ENCODE measurements at regions of chr3 and their contacts with region 1.

Region 1: GRCh38 chr3:138915503-138916498 is 31.1 kb downstream of the FOXL2 start:
- DNase-seq: peak; percentile 82
- H3K4me3 ChIP-seq: peak overlapping the region; percentile 48 to 69 (median 58)
- H3K27ac ChIP-seq: peak overlapping the region; percentile 50
- H3K4me1 ChIP-seq: peaks cover 15% of the 10 kb centered on the region
- H3K27me3 ChIP-seq: no peaks in the 10 kb centered on the region
- CTCF ChIP-seq: peak; percentile 61 to 87

Region 2: DNA sequence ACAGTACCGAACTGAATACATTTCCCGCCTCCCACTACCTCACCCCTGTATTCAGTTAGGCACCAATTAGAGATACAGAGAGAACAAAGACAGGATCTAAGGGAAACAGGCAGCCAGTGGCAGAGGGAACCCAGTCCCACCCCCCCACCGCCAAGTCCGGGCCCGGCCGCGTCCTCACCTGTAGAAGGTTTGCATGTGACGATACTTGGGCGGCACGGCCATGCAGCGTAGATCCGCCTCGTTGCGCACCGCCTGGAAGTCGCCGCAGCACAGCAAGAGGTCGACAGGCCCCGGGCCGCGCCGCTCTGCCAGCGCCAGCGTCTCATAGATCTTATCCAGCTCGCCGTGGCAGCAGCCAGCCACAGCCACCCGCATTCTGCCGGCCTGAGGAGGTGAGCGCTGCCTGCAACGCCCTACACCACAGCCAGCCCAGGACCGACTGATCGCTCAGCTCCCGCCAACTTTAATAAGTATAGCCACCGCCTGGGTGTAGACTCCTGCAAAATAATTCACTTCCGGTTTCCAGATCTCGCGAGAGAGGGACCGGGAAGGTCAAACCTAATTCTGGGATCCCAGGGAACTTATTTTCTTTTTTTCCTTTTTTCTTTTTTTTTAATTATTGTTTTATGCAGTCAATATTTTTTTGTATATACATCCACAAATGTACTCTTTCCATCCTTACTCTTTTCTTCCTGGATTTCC is 741.2 kb before region 1 on chr3 and contains the start of gene DBR1:
- CTCF ChIA-PET with region 1: no interaction called
- dilution Hi-C with region 1: no loop called
- in situ Hi-C with region 1: loop called in 1 of 2 experiments (anchors 25 kb)
- intact Hi-C with region 1: no loop called
- DNase-seq: peak; percentile 79
- H3K4me3 ChIP-seq: peak within 1 kb of the TSS; percentile 80 to 98 (median 81)
- H3K27ac ChIP-seq: peak within 1 kb of the TSS; percentile 56
- H3K4me1 ChIP-seq: peaks cover 3% of the 10 kb centered on the region
- H3K27me3 ChIP-seq: no peaks in the 10 kb centered on the region
- CTCF ChIP-seq: no peak
- total RNA-seq, gene DBR1: 12.5 to 16.7 TPM

Region 3: DNA sequence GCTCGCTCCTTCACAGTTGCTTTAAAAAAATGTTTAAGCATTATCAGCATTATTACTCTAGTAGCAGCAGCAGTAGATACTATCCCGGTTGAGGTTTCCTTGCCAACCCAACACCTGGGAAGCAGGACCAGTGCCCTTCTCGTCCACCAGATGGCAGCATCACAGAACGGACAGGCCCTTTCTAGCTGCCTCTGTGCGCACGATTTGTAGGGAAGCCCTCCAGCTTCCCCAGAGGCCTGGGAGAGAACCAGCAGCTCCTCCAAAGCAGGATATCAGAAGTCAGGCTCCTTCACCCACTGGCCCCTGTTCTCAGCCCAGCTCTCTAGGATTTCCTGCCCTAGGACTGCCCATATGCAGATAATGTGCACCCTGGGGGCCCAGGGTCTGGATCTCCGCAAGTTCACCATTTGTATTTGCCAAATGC is 498.2 kb before region 1 on chr3:
- CTCF ChIA-PET with region 1: no interaction called
- dilution Hi-C with region 1: no loop called
- in situ Hi-C with region 1: loop called (anchors 10 to 25 kb)
- intact Hi-C with region 1: loop called (anchors 1 kb)
- DNase-seq: peak; percentile 69
- H3K4me3 ChIP-seq: no peak overlapping the region
- H3K27ac ChIP-seq: no peak overlapping the region
- H3K4me1 ChIP-seq: no peaks in the 10 kb centered on the region
- H3K27me3 ChIP-seq: no peaks in the 10 kb centered on the region
- CTCF ChIP-seq: peak; percentile 97 to 98

Region 4: DNA sequence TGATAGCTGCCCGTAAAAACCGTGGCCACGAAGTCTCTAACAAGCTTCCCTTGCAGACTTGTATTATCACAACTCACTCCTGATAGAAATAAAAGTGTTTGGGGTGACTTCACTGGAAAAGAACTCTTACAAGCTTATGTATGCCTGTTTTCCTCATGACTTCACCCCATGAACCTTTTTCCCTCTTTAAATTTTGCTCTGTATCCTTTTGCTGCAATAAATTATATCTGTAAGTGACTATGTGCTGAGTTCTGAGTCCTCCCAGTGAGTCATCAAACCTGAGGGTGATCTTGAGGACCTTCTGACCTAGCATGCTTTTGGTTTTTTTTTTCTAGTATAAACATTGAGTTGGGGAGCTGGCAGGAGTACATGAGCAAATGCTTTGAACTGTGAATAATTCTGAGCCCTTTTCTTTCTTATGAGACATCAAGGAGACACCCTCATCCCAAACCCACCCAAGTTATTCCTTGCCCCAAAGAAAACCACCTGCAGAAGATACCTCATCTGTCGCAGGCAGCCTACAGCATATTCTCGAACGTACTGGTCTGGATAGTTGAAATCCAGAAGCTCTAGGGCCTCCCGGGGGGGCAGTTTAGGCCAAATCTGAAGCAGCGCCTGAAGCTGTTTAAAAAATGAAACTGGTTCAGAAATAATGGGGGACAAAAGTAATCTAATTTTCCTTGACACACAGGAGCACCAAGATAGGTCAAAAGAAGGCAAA is 221.4 kb before region 1 on chr3:
- CTCF ChIA-PET with region 1: interaction called, 5 read pairs
- dilution Hi-C with region 1: no loop called
- in situ Hi-C with region 1: loop called (anchors 5 kb)
- intact Hi-C with region 1: loop called (anchors 1 kb)
- DNase-seq: peak; percentile 88
- H3K4me3 ChIP-seq: no peak overlapping the region
- H3K27ac ChIP-seq: no peak overlapping the region
- H3K4me1 ChIP-seq: peaks cover 10% of the 10 kb centered on the region
- H3K27me3 ChIP-seq: no peaks in the 10 kb centered on the region
- CTCF ChIP-seq: no peak

Region 5: DNA sequence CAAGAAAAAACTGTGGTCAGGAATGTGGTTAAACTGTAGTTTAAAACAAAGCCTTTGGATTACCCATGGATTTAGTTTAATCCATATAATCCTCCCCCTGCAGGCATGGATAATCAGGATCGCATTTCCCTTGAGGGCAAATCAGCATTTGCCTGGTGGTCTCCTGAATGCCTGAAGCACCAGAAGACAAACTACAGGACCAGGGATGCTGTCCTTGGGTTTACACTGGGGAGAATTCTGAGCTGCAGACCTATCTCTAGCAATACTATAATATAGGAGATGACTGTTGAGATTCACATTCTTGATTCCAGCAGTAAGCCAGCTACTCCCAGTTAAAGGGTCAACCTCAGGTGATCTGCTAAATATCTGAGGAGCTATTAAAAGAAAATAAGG is 91.7 kb before region 1 on chr3:
- CTCF ChIA-PET with region 1: interaction called, 34 read pairs
- dilution Hi-C with region 1: loop called (anchors 5 kb)
- in situ Hi-C with region 1: no loop called
- intact Hi-C with region 1: no loop called
- DNase-seq: no peak
- H3K4me3 ChIP-seq: no peak overlapping the region
- H3K27ac ChIP-seq: no peak overlapping the region
- H3K4me1 ChIP-seq: peaks cover 8% of the 10 kb centered on the region
- H3K27me3 ChIP-seq: no peaks in the 10 kb centered on the region
- CTCF ChIP-seq: no peak

Region 6: GRCh38 chr3:138850151-138850550 is 65.7 kb before region 1 on chr3:
- CTCF ChIA-PET with region 1: no interaction called
- dilution Hi-C with region 1: no loop called
- in situ Hi-C with region 1: no loop called
- intact Hi-C with region 1: no loop called
- DNase-seq: no peak
- H3K4me3 ChIP-seq: no peak overlapping the region
- H3K27ac ChIP-seq: no peak overlapping the region
- H3K4me1 ChIP-seq: no peaks in the 10 kb centered on the region
- H3K27me3 ChIP-seq: no peaks in the 10 kb centered on the region
- CTCF ChIP-seq: no peak

Region 7: DNA sequence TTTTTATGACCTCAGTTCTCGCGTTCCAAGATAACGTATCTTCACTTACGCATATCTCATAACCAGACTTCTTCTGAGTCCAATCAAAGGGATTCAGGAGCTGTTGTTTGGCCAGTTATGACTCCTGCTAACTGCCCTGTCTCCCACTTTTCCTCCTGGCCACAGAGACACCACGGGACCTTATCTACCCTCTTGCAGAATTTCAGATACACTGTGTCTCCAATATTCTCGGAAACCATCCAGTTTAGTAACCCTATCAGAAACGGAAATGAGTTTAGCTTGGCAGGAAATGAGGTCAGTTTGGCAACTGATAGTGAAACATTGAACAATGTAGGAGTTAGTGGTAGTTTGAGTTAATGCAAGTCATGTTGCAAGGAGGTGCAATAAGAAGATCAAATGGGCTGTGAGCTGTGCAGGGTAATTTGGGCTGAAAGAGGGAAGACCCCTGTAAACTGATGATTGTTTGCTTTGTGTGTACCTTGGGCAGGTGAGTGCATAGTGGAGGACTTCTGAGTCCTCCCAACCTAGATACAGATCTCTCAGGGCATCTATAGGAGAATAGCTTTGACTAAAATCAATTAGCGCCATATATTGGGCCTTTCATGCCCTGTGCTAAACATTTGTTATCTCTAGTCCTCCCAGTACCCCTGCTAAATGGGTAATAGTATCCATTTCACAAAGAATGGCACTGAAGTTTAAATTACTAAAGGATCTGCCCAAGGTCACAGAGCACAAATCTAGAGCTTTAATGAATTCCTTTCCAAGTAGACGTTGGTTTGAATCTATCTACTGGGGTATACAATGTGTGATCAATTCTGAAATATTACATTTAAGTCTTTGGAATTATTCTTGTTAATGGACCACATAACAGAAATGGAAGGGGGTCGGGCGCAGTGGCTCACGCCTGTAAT is 39.8 kb before region 1 on chr3:
- CTCF ChIA-PET with region 1: no interaction called
- dilution Hi-C with region 1: no loop called
- in situ Hi-C with region 1: no loop called
- intact Hi-C with region 1: no loop called
- DNase-seq: no peak
- H3K4me3 ChIP-seq: no peak overlapping the region
- H3K27ac ChIP-seq: no peak overlapping the region
- H3K4me1 ChIP-seq: peaks cover 11% of the 10 kb centered on the region
- H3K27me3 ChIP-seq: no peaks in the 10 kb centered on the region
- CTCF ChIP-seq: no peak

Region 8: GRCh38 chr3:138950006-138950644 is 34.3 kb after region 1 on chr3:
- CTCF ChIA-PET with region 1: no interaction called
- dilution Hi-C with region 1: no loop called
- in situ Hi-C with region 1: no loop called
- intact Hi-C with region 1: no loop called
- DNase-seq: no peak
- H3K4me3 ChIP-seq: peak overlapping the region in 1 of 3 experiments; percentile 22
- H3K27ac ChIP-seq: no peak overlapping the region
- H3K4me1 ChIP-seq: peaks cover 23% of the 10 kb centered on the region
- H3K27me3 ChIP-seq: peaks cover 26% of the 10 kb centered on the region
- CTCF ChIP-seq: no peak